Colonic mucosa (tissue), 4 donors: ENCODE measurements at regions of chr1 and their contacts with region 1.

Region 1: GRCh38 chr1:111789666-111790316 is 34.1 kb downstream of the DDX20 start:
- DNase-seq: no peak
- H3K4me3 ChIP-seq: no peak overlapping the region
- H3K27ac ChIP-seq: no peak overlapping the region
- H3K4me1 ChIP-seq: no peaks in the 10 kb centered on the region
- H3K27me3 ChIP-seq: no peaks in the 10 kb centered on the region
- CTCF ChIP-seq: no peak

Region 2: GRCh38 chr1:112337028-112337531 is 547.3 kb after region 1 on chr1:
- intact Hi-C with region 1: loop called (anchors 10 kb)
- DNase-seq: peak; percentile 32
- H3K4me3 ChIP-seq: no peak overlapping the region
- H3K27ac ChIP-seq: no peak overlapping the region
- H3K4me1 ChIP-seq: no peaks in the 10 kb centered on the region
- H3K27me3 ChIP-seq: no peaks in the 10 kb centered on the region
- CTCF ChIP-seq: peak; percentile 33

Region 3: GRCh38 chr1:112386731-112387346 is 597.0 kb after region 1 on chr1:
- intact Hi-C with region 1: no loop called
- DNase-seq: no peak
- H3K4me3 ChIP-seq: no peak overlapping the region
- H3K27ac ChIP-seq: no peak overlapping the region
- H3K4me1 ChIP-seq: no peaks in the 10 kb centered on the region
- H3K27me3 ChIP-seq: no peaks in the 10 kb centered on the region
- CTCF ChIP-seq: no peak